PC-3 (cell line): ENCODE measurements at regions of chr12 and their contacts with region 1.

Region 1: DNA sequence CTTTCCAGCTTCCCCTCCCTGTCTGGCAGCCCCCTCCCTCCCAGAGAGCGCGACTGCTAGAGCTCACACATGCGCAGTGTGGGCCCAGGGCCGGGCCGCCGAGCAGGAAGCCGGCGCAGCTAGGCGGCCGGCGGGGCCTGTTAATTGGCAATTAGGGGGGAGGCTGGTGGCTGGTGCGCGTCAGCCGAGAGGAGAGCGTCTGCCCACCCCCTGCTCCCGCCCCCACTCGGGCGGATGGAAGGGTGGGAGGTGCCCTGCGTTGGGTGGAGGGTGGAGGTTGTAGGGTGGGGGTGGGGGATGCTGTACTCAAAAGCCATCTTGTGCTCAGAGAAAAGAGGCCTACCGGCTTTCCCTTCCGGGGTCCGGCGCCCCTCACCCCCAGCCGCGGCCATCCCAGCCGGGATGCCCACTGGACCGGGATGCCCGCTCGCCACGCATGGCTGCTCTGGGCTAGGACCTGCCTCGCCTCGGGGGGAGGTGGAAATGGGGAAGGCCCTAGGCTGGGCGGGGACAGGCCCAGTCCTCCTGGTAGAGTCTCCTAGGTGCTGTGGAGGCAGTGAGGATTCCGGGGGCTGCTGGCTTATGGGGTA is 9.2 kb downstream of the HOXC8 start:
- DNase-seq: peak; percentile 86
- ATAC-seq: peak; percentile 73
- H3K4me3 ChIP-seq: peak overlapping the region; percentile 96
- H3K27ac ChIP-seq: peak overlapping the region; percentile 38
- H3K4me1 ChIP-seq: peaks cover 21% of the 10 kb centered on the region
- H3K27me3 ChIP-seq: no peaks in the 10 kb centered on the region
- CTCF ChIP-seq: no peak

Region 2: DNA sequence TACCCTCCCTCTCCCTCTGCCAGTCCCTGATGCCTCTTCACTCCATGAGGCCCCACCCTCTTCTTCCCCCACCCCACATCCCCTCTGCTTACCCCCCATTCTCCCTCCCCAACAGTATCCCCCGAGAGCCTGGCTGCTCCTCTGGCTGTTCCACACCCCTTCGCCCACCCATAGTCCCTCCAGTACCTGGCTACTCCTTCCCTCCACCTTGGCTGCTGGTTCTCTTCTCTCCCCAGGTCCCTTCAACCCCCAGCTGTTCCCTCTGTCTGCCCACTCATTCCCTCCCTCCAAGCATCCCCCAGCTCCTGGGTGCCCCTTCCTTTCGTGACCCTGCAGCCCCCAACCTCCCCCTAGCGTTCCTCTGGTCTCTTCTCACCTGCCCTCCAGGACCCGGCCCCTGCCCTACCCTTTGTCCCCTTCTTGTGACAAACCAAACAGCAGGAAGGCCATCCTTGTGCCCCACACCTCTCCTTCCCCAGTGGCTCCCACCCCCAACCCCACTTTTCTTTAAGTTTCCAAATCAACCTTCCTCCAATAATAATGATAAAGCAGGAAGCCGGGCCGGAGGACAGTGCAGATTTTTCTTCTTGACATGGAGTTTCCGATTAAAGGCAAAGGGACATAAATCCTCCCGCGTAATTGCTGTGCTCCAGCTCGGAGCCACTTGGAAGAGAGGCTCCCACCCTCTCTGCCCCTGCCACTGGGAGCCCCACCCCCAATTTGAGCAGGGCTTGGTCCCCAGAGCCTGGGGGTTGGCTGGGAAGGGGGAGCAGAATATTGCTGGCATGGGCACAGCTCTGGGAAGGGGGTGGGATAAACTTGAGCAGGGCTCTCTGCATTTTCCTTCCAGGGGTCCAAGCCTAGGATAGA is 130.8 kb after region 1 on chr12:
- CTCF ChIA-PET with region 1: interaction called, 16 read pairs
- POLR2A ChIA-PET with region 1: no interaction called
- intact Hi-C with region 1: no loop called
- DNase-seq: no peak
- ATAC-seq: no peak
- H3K4me3 ChIP-seq: no peak overlapping the region
- H3K27ac ChIP-seq: no peak overlapping the region
- H3K4me1 ChIP-seq: no peaks in the 10 kb centered on the region
- H3K27me3 ChIP-seq: no peaks in the 10 kb centered on the region
- CTCF ChIP-seq: no peak

Region 3: DNA sequence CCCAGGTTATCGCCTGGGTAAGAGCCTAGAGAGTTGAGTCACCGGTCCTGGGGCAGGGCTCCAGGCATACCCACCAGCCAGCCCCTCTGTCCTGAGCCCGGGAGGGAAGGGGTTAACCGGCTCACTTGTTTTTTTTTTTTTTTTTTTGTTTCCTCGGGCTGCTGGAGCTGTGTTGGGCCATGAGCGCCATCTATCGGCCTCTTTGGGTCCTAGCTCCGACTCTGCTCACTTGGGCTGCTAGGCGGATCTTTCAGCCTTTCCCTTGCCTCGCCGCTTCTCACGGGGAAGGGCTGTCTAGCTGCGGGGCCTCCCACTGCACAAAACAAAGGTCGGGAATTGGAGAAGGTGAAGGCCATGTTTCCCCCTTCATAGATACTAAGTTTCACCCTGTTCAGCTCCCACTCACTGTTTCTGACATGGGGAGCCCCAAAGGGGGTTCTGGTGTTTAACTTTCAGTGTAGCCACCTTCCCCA is 173.6 kb after region 1 on chr12:
- CTCF ChIA-PET with region 1: interaction called, 19 read pairs
- POLR2A ChIA-PET with region 1: no interaction called
- intact Hi-C with region 1: no loop called
- DNase-seq: peak; percentile 84
- ATAC-seq: peak; percentile 61
- H3K4me3 ChIP-seq: peak overlapping the region; percentile 26; the same call in 1 of the 2 replicates
- H3K27ac ChIP-seq: no peak overlapping the region
- H3K4me1 ChIP-seq: peaks cover 24% of the 10 kb centered on the region
- H3K27me3 ChIP-seq: no peaks in the 10 kb centered on the region
- CTCF ChIP-seq: peak; percentile 85

Region 4: DNA sequence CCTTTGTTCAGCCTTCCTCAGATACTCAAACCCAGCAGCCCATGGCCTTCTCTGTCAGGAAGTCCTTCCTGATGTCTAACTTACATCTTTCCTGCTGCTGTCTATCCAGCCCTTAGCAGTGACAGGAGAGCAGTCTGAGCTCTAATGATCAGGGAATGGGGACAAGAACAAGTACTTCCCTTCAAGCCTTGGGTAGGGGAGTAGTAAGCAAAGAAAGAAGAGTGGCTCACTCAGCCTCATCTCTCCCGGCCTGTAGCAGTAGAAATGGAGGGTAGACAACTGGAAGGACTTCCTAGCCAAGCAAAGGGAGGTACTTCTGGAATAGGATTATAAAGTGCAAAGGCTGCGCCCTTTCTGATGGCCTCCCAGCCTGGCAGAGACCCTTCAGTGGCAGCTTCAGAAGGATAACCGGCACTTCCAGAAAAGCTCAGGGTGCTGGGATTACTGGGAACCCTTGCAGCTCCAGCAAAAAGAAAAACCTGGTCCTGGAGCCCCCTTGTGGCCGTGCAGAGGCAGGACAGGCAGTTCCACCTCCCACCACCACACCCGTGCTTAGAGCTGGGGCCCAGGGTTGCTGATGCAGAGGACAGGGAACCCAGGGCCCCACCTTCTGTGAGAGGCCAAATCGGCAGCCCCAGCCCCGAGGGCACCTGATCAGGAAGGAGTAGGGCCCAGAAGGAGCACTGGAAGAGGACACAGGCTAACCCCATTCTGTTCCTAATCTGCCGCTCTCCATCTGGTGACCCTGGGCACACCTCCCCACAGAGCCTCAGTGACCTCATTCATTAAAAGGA is 183.2 kb after region 1 on chr12:
- CTCF ChIA-PET with region 1: interaction called, 4 read pairs
- POLR2A ChIA-PET with region 1: interaction called, 11 read pairs
- intact Hi-C with region 1: no loop called
- DNase-seq: peak; percentile 77
- ATAC-seq: peak; percentile 89
- H3K4me3 ChIP-seq: no peak overlapping the region
- H3K27ac ChIP-seq: no peak overlapping the region
- H3K4me1 ChIP-seq: peaks cover 8% of the 10 kb centered on the region
- H3K27me3 ChIP-seq: no peaks in the 10 kb centered on the region
- CTCF ChIP-seq: peak; percentile 90